ENCODE measurements at regions of chr6 and their contacts with region 1.

Region 1: GRCh38 chr6:24766680-24767462 is 7.9 kb upstream of the GMNN start:
- DNase-seq: no peak
- ATAC-seq: peak; percentile 78
- H3K4me3 Mint-ChIP-seq: no peak overlapping the region
- H3K27ac Mint-ChIP-seq: no peak overlapping the region
- H3K4me1 Mint-ChIP-seq: no peaks in the 10 kb centered on the region
- H3K27me3 Mint-ChIP-seq: no peaks in the 10 kb centered on the region
- CTCF ChIP-seq: no peak

Region 2: DNA sequence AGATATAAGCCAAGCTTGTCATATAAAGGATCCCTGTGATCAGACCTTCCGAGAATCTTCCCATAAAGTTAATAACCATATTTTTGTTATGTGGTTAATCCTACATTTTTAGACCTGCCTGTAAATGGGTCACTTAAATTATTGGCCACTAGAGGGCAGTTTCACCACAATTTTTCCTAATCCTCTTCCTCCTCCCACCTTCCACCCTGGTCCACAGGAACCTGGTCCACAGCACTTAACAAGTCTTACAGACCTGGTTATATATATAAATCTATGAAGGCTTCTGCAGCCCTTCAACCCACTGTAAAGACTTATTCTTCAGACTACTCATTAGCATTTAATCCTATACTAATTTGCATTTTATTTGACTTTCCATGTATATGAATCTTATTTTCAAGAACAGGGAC is 335.8 kb before region 1 on chr6:
- CTCF ChIA-PET with region 1: no interaction called
- POLR2A ChIA-PET with region 1: no interaction called
- intact Hi-C with region 1: loop called (anchors 1 kb)
- DNase-seq: no peak
- ATAC-seq: peak; percentile 42
- H3K4me3 Mint-ChIP-seq: no peak overlapping the region
- H3K27ac Mint-ChIP-seq: no peak overlapping the region
- H3K4me1 Mint-ChIP-seq: no peaks in the 10 kb centered on the region
- H3K27me3 Mint-ChIP-seq: no peaks in the 10 kb centered on the region
- CTCF ChIP-seq: peak; percentile 52

Region 3: DNA sequence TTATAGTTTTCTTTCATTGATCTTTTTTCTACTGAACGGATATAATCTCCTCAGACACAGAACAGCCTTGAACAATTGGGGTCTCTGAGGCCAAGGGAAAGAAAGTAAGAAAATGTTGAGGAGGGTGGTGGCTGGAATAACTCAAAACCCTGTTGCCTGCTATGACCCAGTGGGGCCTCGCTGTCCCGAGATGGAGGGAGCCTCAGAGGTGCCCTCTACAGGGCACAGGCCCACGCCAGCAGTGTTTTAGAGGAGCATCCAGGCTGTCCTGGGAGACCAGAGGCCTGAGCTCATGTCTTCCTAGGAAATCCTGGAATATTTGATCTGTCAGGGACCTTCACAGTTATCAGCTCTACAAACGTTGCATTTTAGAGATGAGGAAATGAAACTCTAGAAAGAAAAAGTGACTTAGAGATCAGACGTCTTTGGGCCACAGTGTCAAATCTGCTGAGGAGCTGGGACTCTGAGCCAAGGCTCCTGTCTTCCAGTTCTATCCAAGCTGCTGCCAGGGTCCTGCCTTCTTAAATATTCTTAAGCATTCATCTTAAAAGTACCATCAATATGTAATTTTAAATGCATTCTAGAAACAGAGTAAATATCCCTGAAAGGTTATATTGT is 245.8 kb before region 1 on chr6:
- CTCF ChIA-PET with region 1: interaction called, 3 read pairs
- POLR2A ChIA-PET with region 1: no interaction called
- intact Hi-C with region 1: loop called (anchors 1 kb)
- DNase-seq: peak; percentile 35
- ATAC-seq: peak; percentile 40
- H3K4me3 Mint-ChIP-seq: peak overlapping the region; percentile 42
- H3K27ac Mint-ChIP-seq: peak overlapping the region; percentile 88
- H3K4me1 Mint-ChIP-seq: peaks cover 62% of the 10 kb centered on the region
- H3K27me3 Mint-ChIP-seq: no peaks in the 10 kb centered on the region
- CTCF ChIP-seq: no peak

Region 4: GRCh38 chr6:24666641-24667377 is 100.1 kb before region 1 on chr6 and contains the starts of genes ACOT13 and TDP2:
- CTCF ChIA-PET with region 1: no interaction called
- POLR2A ChIA-PET with region 1: no interaction called
- intact Hi-C with region 1: loop called (anchors 2 kb)
- DNase-seq: peak; percentile 92
- ATAC-seq: peak; percentile 94
- H3K4me3 Mint-ChIP-seq: peak within 1 kb of the TSS; percentile 99
- H3K27ac Mint-ChIP-seq: peak within 1 kb of the TSS; percentile 96
- H3K4me1 Mint-ChIP-seq: peaks cover 46% of the 10 kb centered on the region
- H3K27me3 Mint-ChIP-seq: no peaks in the 10 kb centered on the region
- CTCF ChIP-seq: no peak
- total RNA-seq, gene ACOT13: 12.0 and 13.8 TPM in 2 replicates
- total RNA-seq, gene TDP2: 48.9 and 51.1 TPM in 2 replicates

Region 5: DNA sequence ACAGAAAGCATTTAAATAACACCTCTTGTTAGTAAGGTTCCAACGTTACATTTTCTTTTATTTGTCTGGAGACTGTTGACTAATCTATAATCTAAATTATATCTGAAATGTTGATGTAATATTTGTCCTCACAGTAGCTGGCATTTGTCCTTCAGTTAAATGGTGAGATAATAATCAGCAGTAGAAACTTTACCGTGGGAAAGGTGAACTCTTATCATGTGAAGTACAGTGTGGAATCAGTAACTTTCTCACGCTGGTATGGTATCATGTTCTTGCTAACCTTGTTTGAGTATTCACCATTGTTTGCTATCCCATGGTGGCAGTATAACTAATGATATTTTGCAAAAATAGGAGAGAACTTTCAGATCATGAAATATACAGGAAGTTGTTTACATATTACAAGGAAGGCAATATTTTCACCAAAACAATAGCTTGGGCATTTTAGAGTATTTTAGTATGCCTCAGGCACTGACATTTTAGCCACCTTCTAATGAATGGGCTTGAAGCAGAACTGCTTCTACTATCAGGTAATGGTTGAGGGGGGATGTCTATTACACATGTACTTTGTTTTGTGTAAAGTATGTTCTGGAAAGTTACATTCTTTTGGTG is 12.6 kb after region 1 on chr6:
- CTCF ChIA-PET with region 1: no interaction called
- POLR2A ChIA-PET with region 1: no interaction called
- intact Hi-C with region 1: no loop called
- DNase-seq: no peak
- ATAC-seq: no peak
- H3K4me3 Mint-ChIP-seq: no peak overlapping the region
- H3K27ac Mint-ChIP-seq: no peak overlapping the region
- H3K4me1 Mint-ChIP-seq: peaks cover 24% of the 10 kb centered on the region
- H3K27me3 Mint-ChIP-seq: no peaks in the 10 kb centered on the region
- CTCF ChIP-seq: no peak

Region 6: DNA sequence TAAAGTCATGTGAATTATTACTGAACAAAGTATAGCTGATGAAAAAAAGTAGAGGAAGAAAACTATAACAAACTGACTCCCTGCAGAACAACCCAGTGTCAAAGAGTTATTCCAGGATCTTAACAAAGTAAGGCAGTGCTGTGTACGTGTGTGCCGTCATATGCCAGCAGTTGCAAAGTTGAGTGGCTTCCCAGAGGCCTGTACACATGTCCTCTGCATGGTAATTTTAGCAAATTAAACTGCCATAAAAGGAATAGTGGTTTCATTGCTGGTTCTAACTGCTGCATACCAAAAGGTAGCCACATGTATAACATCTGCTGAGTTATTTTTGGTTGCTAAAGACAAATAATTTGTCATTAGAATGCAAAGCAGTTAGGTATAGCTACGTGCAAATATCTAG is 124.1 kb after region 1 on chr6:
- CTCF ChIA-PET with region 1: no interaction called
- POLR2A ChIA-PET with region 1: no interaction called
- intact Hi-C with region 1: no loop called
- DNase-seq: no peak
- ATAC-seq: peak; percentile 49
- H3K4me3 Mint-ChIP-seq: peak overlapping the region; percentile 13
- H3K27ac Mint-ChIP-seq: peak overlapping the region; percentile 80
- H3K4me1 Mint-ChIP-seq: peaks cover 90% of the 10 kb centered on the region
- H3K27me3 Mint-ChIP-seq: no peaks in the 10 kb centered on the region
- CTCF ChIP-seq: no peak

Region 7: DNA sequence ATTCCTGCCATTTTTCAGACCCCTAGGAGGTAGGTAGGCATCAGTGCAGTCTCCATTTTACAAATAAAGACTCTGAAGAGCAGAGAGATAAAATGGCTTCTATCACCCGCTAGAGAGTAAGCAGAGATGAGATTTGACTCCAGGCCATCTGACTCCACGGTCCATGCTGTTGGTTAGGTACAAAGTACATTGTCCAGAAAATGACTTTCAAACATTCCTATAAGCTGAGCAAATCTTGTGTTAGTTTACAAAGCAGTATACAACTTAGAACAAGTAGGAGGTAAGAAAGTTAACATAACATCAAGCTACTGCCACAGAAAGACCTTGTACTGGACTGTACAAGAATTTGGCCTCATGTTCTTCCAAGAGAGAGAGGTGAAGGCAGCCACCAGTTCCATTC is 1748.1 kb after region 1 on chr6:
- CTCF ChIA-PET with region 1: no interaction called
- POLR2A ChIA-PET with region 1: no interaction called
- intact Hi-C with region 1: no loop called
- DNase-seq: no peak
- ATAC-seq: no peak
- H3K4me3 Mint-ChIP-seq: no peak overlapping the region
- H3K27ac Mint-ChIP-seq: no peak overlapping the region
- H3K4me1 Mint-ChIP-seq: peaks cover 1% of the 10 kb centered on the region
- H3K27me3 Mint-ChIP-seq: no peaks in the 10 kb centered on the region
- CTCF ChIP-seq: no peak